Activated CD4-positive, alpha-beta memory T cell treated with anti-CD3 and anti-CD28 coated beads for 36 hours (primary cell): ENCODE measurements at regions of chr15 and their contacts with region 1.

Region 1: GRCh38 chr15:88701561-88702095 is 62.8 kb downstream of the ISG20 start:
- DNase-seq: peak; percentile 50
- H3K4me3 Mint-ChIP-seq: no peak overlapping the region
- H3K27ac Mint-ChIP-seq: no peak overlapping the region
- H3K4me1 Mint-ChIP-seq: peaks cover 11% of the 10 kb centered on the region
- H3K27me3 Mint-ChIP-seq: peaks cover 15% of the 10 kb centered on the region

Region 2: DNA sequence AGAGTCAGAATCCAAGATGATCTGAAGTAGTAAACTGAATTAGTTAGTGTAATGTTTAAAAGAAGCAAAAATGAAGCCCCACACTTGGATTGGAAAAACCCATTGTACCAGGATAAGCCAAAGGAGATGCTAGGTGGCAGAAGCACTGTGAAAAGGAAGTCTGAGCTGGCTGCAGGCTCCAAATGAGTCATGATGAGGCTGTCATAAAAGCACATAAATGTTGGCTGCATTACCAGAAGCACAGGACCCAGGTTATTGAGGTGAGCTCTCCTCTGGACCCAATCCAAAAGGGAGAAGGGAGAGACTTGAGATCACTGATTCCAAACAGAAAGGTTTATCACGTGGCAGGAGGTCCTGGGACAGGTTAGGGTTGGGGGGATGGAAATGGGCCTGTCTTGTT is 98.4 kb after region 1 on chr15:
- CTCF ChIA-PET with region 1: no interaction called
- POLR2A ChIA-PET with region 1: no interaction called
- intact Hi-C with region 1: loop called (anchors 10 kb)
- DNase-seq: no peak
- H3K4me3 Mint-ChIP-seq: no peak overlapping the region
- H3K27ac Mint-ChIP-seq: no peak overlapping the region
- H3K4me1 Mint-ChIP-seq: peaks cover 6% of the 10 kb centered on the region
- H3K27me3 Mint-ChIP-seq: peaks cover 45% of the 10 kb centered on the region